Activated CD8-positive, alpha-beta T cell treated with anti-CD3 and anti-CD28 coated beads, Interleukin-2, amount 10 ng/mL, durations not matched to agents 7 days and 5 days (primary cell): ENCODE measurements at regions of chr14 and their contacts with region 1.

Region 1: DNA sequence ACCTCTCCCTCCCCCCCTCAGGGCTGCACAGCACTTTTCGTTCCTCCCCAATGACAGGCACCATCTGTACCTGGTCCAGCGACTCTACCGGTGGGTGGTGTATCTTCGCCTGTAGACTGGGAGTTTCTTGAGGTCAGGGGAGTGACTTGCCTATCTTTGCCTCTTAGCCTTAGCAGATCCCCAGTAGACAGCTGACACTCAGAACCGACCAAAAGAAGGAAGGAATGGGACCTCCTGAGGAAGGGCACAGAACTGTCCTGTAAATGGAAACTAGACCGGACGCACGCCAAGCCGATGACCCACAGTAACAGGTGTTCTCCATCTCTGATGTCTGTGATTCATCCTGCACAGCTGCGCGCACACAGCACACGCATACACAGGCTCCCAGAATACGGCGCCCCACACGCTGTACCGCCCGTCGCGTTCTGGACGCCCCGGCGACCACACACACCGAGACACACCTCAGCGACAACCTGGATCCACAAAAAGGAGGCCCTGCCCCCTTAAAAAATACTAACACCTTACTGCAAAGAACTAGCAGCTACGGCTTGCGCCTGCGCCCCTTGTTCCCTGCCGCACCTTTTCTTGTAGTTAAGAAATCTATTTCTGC is 673 bp upstream of the TTC9 start:
- DNase-seq: peak; percentile 65
- ATAC-seq: peak; percentile 67
- H3K4me3 Mint-ChIP-seq: peak overlapping the region; percentile 91
- H3K27ac Mint-ChIP-seq: peak overlapping the region; percentile 90
- H3K4me1 Mint-ChIP-seq: peaks cover 45% of the 10 kb centered on the region
- H3K27me3 Mint-ChIP-seq: no peaks in the 10 kb centered on the region

Region 2: DNA sequence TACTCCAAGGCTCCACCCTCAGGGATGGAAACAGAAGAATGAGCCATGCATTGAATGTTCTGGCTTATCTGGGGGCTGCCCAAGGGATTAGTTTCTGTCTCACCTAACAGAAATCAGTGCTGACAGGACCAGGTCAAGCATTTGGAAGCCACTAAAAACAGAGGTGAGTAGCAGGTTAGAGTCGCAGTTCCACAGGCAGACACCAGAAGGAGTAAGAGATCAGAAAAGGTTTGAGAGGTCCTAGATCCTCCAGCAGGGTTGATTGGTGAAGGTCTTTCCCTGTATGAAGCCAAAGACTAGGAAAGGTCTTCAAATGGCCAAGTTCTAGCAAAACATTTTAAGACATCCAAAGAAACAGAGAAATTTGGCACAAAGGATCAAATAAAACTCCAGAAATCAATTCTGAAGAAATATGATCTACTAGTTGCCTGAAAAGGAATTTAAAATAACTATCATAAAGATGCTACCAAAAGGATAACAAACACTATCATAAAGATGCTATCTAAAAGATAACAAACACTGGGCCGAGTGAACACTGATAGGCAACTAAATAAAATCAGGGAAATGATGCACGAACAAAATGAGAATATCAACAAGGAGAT is 18.8 kb before region 1 on chr14:
- CTCF ChIA-PET with region 1: interaction called, 13 read pairs
- POLR2A ChIA-PET with region 1: no interaction called
- DNase-seq: peak; percentile 72
- ATAC-seq: peak; percentile 79
- H3K4me3 Mint-ChIP-seq: no peak overlapping the region
- H3K27ac Mint-ChIP-seq: no peak overlapping the region
- H3K4me1 Mint-ChIP-seq: no peaks in the 10 kb centered on the region
- H3K27me3 Mint-ChIP-seq: peaks cover 4% of the 10 kb centered on the region

Region 3: GRCh38 chr14:70655110-70655826 is 14.2 kb after region 1 on chr14:
- CTCF ChIA-PET with region 1: interaction called, 26 read pairs
- POLR2A ChIA-PET with region 1: interaction called, 163 read pairs
- DNase-seq: peak; percentile 91
- ATAC-seq: peak; percentile 91
- H3K4me3 Mint-ChIP-seq: peak overlapping the region; percentile 80
- H3K27ac Mint-ChIP-seq: peak overlapping the region; percentile 99
- H3K4me1 Mint-ChIP-seq: peaks cover 84% of the 10 kb centered on the region
- H3K27me3 Mint-ChIP-seq: no peaks in the 10 kb centered on the region

Region 4: GRCh38 chr14:70660949-70661893 is 20.2 kb after region 1 on chr14:
- CTCF ChIA-PET with region 1: interaction called, 26 read pairs
- POLR2A ChIA-PET with region 1: interaction called, 163 read pairs
- DNase-seq: peak; percentile 70
- ATAC-seq: peak; percentile 74
- H3K4me3 Mint-ChIP-seq: peak overlapping the region; percentile 58
- H3K27ac Mint-ChIP-seq: peak overlapping the region; percentile 91
- H3K4me1 Mint-ChIP-seq: peaks cover 90% of the 10 kb centered on the region
- H3K27me3 Mint-ChIP-seq: no peaks in the 10 kb centered on the region

Region 5: GRCh38 chr14:70809543-70810244 is 168.7 kb after region 1 on chr14:
- CTCF ChIA-PET with region 1: interaction called, 6 read pairs
- POLR2A ChIA-PET with region 1: interaction called, 16 read pairs
- DNase-seq: peak; percentile 97
- ATAC-seq: peak; percentile 90
- H3K4me3 Mint-ChIP-seq: no peak overlapping the region
- H3K27ac Mint-ChIP-seq: no peak overlapping the region
- H3K4me1 Mint-ChIP-seq: peaks cover 15% of the 10 kb centered on the region
- H3K27me3 Mint-ChIP-seq: peaks cover 2% of the 10 kb centered on the region